Activated B cell treated with CpG ODN at 0.5 μM for 24 hours (primary cell): ENCODE measurements at regions of chr16 and their contacts with region 1.

Region 1: DNA sequence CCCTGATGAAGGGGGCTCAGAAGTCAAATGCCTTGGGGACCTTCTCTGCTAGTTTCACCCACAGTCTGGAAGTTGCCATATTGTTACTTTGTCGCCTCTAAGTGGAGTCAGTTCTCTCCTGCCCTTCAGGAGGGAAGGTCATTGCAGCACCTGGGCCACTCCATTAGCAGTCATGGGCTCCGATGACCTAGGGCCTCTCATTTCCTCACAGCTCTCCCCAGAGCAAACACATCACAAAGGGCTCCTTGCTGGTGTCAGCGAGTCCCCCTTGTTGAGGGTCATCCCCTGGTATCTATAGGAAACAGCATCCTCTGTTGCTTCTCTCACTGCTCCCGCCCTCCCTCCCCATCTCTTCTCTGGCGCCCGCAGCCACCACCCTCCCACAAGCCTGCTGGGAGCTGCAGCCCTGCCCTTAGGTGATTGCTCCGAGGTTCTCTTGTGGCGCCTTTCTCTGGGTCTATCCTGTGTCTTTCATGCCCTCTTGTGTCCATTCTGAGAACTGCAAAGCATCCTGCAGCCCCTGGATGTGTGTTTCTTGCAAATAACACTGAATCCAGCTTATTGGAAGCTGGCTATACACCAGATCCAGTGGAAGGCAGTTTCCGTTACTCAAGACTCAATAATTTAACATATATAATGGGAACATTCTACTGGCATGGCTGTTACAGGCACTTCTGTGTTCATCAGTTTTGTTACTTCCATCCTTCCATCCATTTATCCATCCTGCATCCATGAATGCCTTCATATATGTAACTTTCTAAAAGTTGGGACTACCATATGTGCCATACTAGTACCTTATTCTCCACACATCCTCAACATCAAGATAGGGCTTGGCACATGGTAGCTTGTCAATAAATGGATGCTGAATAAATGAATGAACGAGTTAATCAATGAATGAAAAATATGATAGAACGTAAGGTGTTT is 21.2 kb downstream of the PDILT start:
- DNase-seq: no peak
- ATAC-seq: peak; percentile 45
- H3K4me3 Mint-ChIP-seq: no peak overlapping the region
- H3K27ac Mint-ChIP-seq: no peak overlapping the region
- H3K4me1 Mint-ChIP-seq: no peaks in the 10 kb centered on the region
- H3K27me3 Mint-ChIP-seq: peaks cover 22% of the 10 kb centered on the region
- CTCF ChIP-seq: peak; percentile 78

Region 2: GRCh38 chr16:19898924-19899604 is 484.3 kb before region 1 on chr16:
- CTCF ChIA-PET with region 1: no interaction called
- POLR2A ChIA-PET with region 1: no interaction called
- intact Hi-C with region 1: loop called (anchors 2 kb)
- DNase-seq: no peak
- ATAC-seq: peak; percentile 52
- H3K4me3 Mint-ChIP-seq: no peak overlapping the region
- H3K27ac Mint-ChIP-seq: no peak overlapping the region
- H3K4me1 Mint-ChIP-seq: no peaks in the 10 kb centered on the region
- H3K27me3 Mint-ChIP-seq: peaks cover 15% of the 10 kb centered on the region
- CTCF ChIP-seq: peak; percentile 79

Region 3: DNA sequence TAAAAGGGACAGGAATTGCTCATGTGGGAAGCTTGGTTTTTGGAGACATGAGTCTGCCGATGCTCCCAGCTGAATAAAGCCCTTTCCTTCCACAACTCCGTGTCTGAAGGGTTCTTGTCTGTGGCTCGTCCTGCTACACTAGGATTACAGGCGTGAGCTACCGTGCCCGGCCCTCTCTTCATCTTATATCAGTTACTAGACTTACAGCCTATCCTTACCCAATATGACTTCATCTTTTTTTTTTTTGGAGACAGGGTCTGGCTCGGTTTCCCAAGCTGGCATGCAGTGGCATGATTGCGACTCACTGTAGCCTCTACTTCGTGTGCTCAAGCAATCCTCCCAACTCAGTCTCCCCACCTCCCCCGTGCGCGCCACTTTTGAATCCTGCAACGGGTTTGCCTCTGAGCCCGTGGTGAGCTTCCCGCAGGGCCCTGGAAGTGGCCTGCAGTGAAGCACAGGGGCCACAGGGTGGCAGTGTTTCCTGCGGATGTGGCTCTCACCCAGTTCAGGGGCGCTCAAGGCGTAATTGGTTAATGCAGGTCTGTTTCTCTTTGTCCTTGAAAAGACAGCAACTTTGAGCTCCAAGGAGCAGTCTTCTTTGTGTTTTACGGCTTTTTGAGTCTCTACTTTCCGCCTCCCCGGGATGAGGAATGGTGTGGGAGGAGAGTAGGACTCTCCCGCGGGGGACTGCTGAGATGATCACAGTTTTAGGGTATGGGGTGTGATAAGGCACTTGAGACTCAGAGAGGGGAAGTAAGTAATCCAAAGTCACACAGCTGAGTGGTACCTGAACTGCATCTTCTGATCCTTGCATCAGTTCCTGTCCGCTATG is 476.0 kb before region 1 on chr16:
- CTCF ChIA-PET with region 1: interaction called, 34 read pairs
- POLR2A ChIA-PET with region 1: no interaction called
- intact Hi-C with region 1: no loop called
- DNase-seq: peak; percentile 29
- ATAC-seq: peak; percentile 86
- H3K4me3 Mint-ChIP-seq: no peak overlapping the region
- H3K27ac Mint-ChIP-seq: no peak overlapping the region
- H3K4me1 Mint-ChIP-seq: peaks cover 9% of the 10 kb centered on the region
- H3K27me3 Mint-ChIP-seq: peaks cover 21% of the 10 kb centered on the region
- CTCF ChIP-seq: no peak

Region 4: DNA sequence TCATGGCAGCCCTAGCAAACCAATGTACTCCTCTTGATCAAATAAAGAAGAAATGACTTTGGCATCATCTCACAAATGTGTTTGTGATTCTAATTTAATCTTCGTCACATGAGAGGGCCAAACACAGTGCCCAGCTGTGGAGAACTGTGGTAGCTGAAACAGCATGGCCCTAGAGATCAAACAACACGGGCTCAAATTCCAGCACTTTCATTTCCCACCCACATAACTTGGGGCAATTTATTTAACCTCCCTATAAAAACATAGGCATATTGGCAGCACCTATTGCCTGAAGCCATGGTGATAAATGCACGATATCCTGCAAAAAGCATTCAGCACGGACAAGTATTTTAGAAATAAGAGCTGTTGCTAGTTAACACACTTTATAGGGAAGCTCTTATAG is 311.7 kb after region 1 on chr16:
- CTCF ChIA-PET with region 1: no interaction called
- POLR2A ChIA-PET with region 1: no interaction called
- intact Hi-C with region 1: loop called (anchors 10 kb)
- DNase-seq: no peak
- ATAC-seq: no peak
- H3K4me3 Mint-ChIP-seq: no peak overlapping the region
- H3K27ac Mint-ChIP-seq: no peak overlapping the region
- H3K4me1 Mint-ChIP-seq: peaks cover 14% of the 10 kb centered on the region
- H3K27me3 Mint-ChIP-seq: no peaks in the 10 kb centered on the region
- CTCF ChIP-seq: no peak